Sciatic nerve (tissue), 2 donors: ENCODE measurements at regions of chr2 and their contacts with region 1.

Region 1: DNA sequence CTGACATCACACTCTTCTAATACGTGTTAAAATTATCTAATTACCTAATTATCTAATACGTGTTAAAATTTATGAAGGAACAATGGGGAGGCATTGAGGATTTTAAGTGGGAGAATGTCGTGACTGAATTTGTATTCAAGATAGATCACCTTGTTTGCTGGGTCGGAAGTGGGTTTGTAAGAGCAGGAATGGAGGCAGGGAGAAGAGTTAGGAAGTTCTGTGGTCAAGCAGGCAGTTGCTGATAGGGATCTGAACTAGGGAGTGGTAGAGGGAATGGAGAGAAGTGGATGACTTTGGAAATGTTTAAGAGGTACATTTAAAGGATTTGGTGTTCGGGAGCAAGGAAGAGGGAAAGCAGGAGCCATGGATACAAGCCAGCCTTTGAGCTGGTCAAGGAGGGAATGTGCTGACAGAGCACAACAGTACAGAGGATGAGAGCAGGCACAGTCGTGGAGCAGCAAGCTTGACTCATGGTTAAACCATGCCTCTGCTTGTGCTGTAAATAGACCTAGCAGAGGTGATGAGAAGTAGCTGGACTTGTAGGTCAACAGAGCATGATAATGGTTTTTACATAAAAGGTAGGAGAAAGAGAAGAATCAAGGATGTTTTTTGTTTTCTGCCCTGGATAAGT is 16.2 kb downstream of the IL18RAP start:
- DNase-seq: no peak
- ATAC-seq: no peak

Region 2: DNA sequence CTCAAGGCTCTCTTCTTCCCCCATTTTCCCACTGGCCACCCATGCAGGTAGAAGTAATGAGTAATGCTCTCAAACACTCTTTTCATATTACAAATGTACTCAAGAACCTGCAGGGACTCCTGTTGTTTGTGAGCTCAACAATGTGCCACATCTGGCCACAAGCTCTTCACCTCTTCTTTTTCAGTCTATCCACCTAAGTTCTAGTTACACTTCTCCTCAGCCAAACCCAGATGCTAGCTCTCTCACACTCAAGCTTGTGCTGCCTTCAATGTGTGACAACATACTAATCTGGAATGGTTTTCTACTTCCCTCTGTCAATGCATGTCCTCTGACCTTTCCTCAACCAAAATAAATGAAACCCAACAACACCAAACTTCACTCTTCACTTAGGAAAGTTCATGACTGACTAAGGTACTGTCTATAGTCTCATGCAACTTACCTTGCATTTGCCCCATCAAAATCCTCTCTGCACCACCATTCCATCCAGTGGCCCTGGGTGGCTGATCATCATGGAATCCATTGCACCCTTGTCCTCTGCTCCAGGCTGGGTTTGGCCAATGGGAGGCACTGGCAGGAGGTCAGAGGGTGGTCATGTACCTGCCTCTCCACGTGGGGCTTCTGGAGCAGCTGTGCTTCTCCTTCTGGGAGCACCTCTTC is 88.9 kb before region 1 on chr2:
- intact Hi-C with region 1: no loop called
- DNase-seq: no peak
- ATAC-seq: no peak

Region 3: DNA sequence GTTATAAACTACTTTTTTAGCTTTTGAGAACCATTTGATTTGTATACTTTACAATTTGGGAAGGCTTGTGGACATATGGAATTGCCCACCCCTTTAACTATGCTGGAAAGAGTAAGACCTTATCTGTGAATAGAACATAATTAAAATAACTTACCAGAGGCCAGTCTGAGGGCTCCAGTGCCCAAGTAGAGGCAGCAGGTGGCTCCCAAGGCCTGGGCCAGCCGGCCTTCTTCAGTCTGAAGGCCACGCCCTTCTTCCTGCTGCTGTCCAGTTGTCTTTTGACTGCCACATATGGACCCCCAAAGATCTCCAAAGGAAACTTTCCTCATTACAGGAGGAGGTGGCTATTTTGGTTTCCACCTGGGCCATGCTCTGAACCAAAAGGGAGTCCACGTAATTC is 28.2 kb before region 1 on chr2:
- intact Hi-C with region 1: loop called (anchors 1 kb)
- DNase-seq: no peak
- ATAC-seq: no peak